Panc1 (cell line): ENCODE measurements at regions of chr2 and their contacts with region 1.

Region 1: DNA sequence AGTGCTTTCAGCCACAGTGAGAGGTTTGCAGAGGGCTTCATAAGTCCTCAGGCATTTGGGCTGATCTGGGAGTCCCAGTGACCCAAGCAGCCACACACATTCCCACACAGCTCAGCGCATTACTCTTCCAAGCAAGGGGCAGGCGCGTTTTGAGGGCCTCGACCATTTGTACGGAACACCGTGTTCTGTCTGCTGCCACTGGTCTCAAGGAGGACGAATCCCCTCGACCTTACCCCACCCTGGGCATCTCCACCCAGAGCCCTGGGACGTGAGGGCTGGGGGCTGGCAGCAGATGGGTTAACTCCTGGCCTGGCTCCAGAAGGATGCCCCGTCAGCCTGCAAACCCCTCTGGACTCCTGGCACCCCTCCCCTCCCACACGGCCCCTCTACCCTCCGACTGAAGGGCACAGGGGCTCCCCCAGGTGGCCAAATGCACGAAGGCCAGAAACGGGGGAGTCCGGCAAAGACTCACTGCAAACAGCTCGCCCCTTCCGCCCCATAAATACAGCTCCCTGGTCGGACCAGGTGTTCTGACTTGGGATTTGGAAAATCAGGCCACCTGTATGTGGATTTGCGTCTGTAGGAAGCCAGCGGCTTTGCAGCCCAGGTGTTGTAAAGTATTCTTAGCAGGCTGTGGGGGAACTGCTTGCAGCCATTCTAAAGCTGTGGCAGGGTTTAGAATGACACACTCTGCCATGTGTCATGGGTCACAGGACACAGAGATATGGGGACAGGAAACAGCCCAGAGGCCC is 33.6 kb upstream of the PTMA start:
- DNase-seq: no peak
- ATAC-seq: peak; percentile 63
- H3K4me3 ChIP-seq: no peak overlapping the region
- H3K27ac ChIP-seq: peak overlapping the region; percentile 96
- H3K4me1 ChIP-seq: peaks cover 49% of the 10 kb centered on the region
- H3K27me3 ChIP-seq: no peaks in the 10 kb centered on the region
- CTCF ChIP-seq: peak; percentile 96

Region 2: GRCh38 chr2:230411570-230412370 is 1263.0 kb before region 1 on chr2:
- CTCF ChIA-PET with region 1: no interaction called
- POLR2A ChIA-PET with region 1: no interaction called
- in situ Hi-C with region 1: no loop called
- intact Hi-C with region 1: no loop called
- DNase-seq: no peak
- ATAC-seq: peak; percentile 87
- H3K4me3 ChIP-seq: peak overlapping the region; percentile 63 to 86
- H3K27ac ChIP-seq: peak overlapping the region; percentile 69
- H3K4me1 ChIP-seq: peaks cover 8% of the 10 kb centered on the region
- H3K27me3 ChIP-seq: no peaks in the 10 kb centered on the region
- CTCF ChIP-seq: no peak

Region 3: DNA sequence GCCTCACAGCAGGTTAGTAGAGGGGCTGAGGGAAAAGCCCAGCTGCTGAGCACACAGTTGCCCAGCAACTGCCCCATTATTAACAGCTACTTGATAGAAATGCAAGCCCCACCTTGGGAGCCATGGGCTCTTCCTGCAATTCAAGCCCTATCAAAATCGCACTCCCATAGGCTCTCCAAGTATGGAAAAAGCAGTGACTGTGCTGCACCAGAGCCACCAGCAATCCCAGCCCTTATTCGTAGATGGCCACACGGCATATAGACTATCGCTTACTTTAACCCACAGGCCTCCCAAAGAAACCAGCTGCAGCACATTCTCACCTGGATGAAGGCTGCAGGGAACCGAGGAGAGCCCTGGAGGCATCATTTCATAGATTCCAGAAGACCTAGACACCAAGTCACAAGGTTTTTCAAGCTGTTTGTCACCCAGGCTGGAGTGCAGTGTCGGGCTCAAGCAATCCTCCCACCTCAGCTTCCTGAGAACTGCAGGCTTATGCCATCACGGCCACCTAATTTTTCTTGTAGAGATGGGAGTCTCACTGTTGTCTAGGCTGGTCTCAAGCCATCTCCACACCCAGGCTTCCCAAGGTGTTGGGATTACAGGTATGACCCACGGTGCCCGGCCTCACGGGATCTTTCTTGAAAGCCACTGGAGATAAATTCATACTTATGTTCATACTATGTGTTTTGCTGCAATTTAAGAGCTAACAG is 221.8 kb before region 1 on chr2:
- CTCF ChIA-PET with region 1: no interaction called
- POLR2A ChIA-PET with region 1: interaction called, 24 read pairs
- in situ Hi-C with region 1: no loop called
- intact Hi-C with region 1: no loop called
- DNase-seq: no peak
- ATAC-seq: peak; percentile 69
- H3K4me3 ChIP-seq: no peak overlapping the region
- H3K27ac ChIP-seq: peak overlapping the region; percentile 44; the same call in 1 of the 2 replicates
- H3K4me1 ChIP-seq: peaks cover 31% of the 10 kb centered on the region
- H3K27me3 ChIP-seq: no peaks in the 10 kb centered on the region
- CTCF ChIP-seq: no peak

Region 4: DNA sequence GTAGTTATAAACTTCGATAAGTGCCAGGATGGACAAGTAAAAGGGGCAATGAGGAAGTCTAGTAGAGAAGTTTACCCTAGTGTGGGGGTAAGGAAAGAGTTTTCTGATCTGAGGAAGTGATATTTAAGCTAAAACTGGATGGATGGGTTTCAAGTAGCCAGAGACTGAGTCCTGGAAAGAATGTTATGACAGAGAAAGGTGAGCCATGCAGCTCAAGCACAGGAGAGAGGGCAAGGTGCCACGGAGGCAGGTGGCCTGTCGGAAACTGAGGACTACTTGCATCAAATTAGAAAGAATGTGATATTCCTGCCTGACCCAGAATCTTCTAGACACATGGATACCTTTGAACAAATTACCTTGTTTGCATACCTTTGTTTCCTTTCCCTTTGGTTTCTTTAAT is 171.0 kb before region 1 on chr2:
- CTCF ChIA-PET with region 1: no interaction called
- POLR2A ChIA-PET with region 1: no interaction called
- in situ Hi-C with region 1: no loop called
- intact Hi-C with region 1: no loop called
- DNase-seq: no peak
- ATAC-seq: no peak
- H3K4me3 ChIP-seq: no peak overlapping the region
- H3K27ac ChIP-seq: no peak overlapping the region
- H3K4me1 ChIP-seq: no peaks in the 10 kb centered on the region
- H3K27me3 ChIP-seq: no peaks in the 10 kb centered on the region
- CTCF ChIP-seq: no peak

Region 5: DNA sequence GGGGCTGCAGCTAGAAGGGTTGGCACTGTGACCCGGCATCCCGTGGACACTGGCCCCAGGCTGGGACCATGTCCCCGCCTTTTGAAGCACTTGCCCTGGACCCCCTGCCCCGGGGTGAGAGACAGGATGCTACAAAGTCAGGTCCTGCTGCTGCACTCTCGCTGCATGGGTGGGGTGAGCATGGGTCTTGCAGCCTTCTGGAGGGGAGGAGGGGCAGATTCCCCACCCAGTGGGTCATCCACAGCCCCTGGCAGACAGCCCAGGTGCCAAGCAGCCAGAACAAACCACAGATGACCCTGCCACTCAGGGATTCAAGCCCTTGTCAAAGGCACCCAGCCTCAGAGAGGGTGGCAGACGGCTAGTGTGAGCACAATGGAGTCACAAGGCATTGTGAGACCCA is 138.8 kb before region 1 on chr2:
- CTCF ChIA-PET with region 1: no interaction called
- POLR2A ChIA-PET with region 1: no interaction called
- in situ Hi-C with region 1: no loop called
- intact Hi-C with region 1: no loop called
- DNase-seq: no peak
- ATAC-seq: no peak
- H3K4me3 ChIP-seq: no peak overlapping the region
- H3K27ac ChIP-seq: no peak overlapping the region
- H3K4me1 ChIP-seq: no peaks in the 10 kb centered on the region
- H3K27me3 ChIP-seq: no peaks in the 10 kb centered on the region
- CTCF ChIP-seq: no peak

Region 6: DNA sequence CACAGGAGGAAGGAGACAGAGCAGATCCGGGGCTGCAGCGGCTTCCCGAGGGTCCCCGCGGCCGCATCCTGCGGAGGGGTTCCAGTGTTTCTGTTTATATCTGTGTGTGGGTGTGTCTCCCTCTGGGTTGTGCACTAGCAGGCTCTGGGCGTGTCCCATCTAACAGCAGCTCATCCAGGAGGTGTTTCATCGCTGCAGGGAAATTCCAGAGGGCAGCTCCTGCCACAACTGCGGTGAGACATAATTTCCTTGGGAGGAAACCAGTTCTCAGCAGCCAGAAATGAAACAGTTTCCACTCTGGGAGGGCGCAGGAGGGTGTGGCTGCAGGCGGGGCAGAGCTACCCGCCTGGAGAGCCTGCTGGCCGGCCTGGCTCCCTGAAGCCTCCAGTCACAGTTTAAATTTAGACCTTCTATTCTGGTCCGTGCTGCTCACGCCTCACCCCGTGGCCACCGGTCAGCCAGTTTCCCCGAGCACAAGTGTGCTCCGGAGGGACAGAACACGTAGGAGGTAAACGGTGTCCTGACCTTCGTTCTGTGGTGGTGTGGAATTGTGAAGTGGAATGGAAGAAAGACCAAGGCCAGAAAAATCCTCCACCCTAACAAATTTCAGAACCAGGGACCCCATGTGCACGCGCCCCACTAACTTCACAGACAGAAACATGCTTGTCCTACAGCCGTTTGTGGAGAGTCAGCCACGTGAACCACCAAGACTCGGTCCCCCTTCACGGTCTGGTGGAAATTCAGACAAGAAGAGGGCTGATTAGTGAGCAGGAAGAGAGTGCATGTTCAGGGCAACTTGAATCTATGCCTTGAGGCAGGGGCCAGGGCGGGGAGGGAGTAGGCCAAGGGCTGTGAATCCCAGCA is 31.9 kb before region 1 on chr2:
- CTCF ChIA-PET with region 1: interaction called, 16 read pairs
- POLR2A ChIA-PET with region 1: no interaction called
- in situ Hi-C with region 1: no loop called
- intact Hi-C with region 1: loop called (anchors 1 kb)
- DNase-seq: peak; percentile 88
- ATAC-seq: peak; percentile 94
- H3K4me3 ChIP-seq: peak overlapping the region; percentile 24 to 48; a peak in 3 of 4 replicates
- H3K27ac ChIP-seq: peak overlapping the region; percentile 91
- H3K4me1 ChIP-seq: peaks cover 39% of the 10 kb centered on the region
- H3K27me3 ChIP-seq: no peaks in the 10 kb centered on the region
- CTCF ChIP-seq: no peak

Region 7: GRCh38 chr2:231692839-231693238 is 18.1 kb after region 1 on chr2:
- CTCF ChIA-PET with region 1: interaction called, 13 read pairs
- POLR2A ChIA-PET with region 1: no interaction called
- in situ Hi-C with region 1: no loop called
- intact Hi-C with region 1: no loop called
- DNase-seq: no peak
- ATAC-seq: 0 out of 2 replicates have a peak, but pooled peaks have one; percentile 22
- H3K4me3 ChIP-seq: no peak overlapping the region
- H3K27ac ChIP-seq: no peak overlapping the region
- H3K4me1 ChIP-seq: no peaks in the 10 kb centered on the region
- H3K27me3 ChIP-seq: no peaks in the 10 kb centered on the region
- CTCF ChIP-seq: no peak

Region 8: DNA sequence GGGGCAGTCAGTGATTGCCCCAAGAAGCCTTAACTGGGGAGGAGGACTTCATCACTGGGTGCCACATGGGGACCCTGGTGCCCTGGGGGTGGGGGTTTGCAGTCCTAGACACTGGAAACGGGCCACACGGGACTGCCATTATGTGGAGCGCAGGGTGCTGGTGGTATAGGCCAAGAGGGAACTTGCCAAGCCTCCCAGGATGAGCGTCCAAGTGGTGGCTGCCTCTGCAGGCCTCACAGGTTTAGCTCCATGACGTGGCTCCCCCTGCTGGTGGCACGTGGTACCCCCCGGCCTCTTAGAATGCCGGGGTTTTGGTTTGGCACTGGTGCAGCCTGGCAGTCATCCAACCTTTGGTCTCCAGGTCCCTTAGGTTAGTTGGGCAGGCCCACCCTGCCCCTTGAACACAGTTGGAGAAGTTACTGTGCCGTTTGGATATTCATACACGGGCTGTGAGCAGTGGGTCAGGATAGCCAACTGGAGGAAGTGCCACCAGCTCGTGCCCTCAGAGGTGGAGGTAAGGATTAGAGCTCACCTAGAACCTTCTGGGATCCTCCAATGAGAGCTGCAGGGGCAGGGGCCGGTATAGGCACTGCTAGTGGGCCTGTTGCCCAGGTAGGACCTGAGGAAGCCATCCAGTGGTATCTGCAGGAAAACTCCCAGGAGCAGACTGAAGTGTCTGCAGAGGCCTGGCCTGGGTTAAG is 39.1 kb after region 1 on chr2:
- CTCF ChIA-PET with region 1: interaction called, 74 read pairs
- POLR2A ChIA-PET with region 1: interaction called, 3 read pairs
- in situ Hi-C with region 1: no loop called
- intact Hi-C with region 1: loop called (anchors 1 kb)
- DNase-seq: no peak
- ATAC-seq: peak; percentile 50
- H3K4me3 ChIP-seq: no peak overlapping the region
- H3K27ac ChIP-seq: peak overlapping the region; percentile 83
- H3K4me1 ChIP-seq: peaks cover 42% of the 10 kb centered on the region
- H3K27me3 ChIP-seq: no peaks in the 10 kb centered on the region
- CTCF ChIP-seq: peak; percentile 94

Region 9: DNA sequence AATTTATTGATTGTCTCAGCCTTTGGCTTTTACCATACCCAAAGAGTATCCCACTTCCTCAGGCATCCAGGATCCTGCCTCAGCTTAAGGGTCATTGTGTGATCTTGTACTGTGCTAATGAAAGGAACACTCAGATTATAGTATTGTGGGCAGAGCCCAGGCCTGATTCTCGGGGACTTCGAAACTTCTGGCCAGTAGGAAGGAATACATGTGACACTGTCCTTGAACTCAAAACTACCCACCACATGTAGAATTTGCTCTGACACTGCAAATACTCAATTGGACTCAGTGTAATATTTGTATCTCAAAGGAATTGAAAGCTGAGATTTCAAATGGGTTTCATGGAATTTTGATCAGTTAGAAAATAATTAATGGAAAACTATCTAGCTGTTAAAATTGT is 302.7 kb after region 1 on chr2:
- CTCF ChIA-PET with region 1: no interaction called
- POLR2A ChIA-PET with region 1: no interaction called
- in situ Hi-C with region 1: no loop called
- intact Hi-C with region 1: no loop called
- DNase-seq: no peak
- ATAC-seq: no peak
- H3K4me3 ChIP-seq: no peak overlapping the region
- H3K27ac ChIP-seq: no peak overlapping the region
- H3K4me1 ChIP-seq: no peaks in the 10 kb centered on the region
- H3K27me3 ChIP-seq: no peaks in the 10 kb centered on the region
- CTCF ChIP-seq: no peak